CD8-positive, alpha-beta T cell (primary cell): ENCODE measurements at regions of chr17 and their contacts with region 1.

Region 1: DNA sequence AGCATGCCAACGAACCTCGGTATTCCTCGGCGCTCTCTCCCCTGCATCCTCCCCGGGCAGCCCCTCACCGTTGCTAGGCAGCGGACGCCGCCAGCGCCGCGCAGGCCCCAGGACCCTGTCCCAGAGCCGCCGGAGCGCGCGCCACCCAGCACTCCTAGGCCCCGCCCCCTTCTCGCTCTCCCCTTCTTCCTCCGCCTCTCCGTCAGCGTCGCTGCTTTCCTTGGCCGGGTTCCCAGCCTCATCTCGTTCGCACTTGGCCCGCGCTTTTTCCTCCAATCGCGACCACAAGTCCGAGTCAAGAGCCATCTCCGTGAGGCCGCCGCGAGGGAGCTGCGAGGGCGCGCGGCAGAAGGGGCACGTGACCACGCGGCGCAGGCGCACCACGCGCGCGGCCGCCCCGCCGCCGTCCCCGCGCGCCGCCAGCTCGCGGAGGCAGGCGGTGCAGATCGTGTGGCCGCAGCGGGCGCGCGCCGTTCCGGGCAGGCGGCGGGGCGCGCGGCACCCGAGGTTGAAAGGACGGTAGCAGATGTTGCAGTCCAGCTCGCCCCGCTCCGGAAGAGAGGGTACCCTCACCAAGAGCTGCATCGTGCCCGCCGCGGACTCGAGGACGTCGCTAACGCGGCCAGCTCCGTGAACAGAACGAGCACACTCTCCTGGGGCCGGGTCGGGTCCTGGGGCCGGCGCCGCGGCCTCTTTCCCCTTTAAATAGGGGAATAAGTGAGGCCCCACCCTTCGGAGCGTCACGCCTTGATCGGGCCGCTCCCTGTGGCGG is at the start of gene RNF227:
- DNase-seq: peak; percentile 52 to 93 (median 80)
- ATAC-seq: peak; percentile 82
- H3K4me3 ChIP-seq: peak within 1 kb of the TSS; percentile 74 to 79
- H3K4me3 Mint-ChIP-seq: peak within 1 kb of the TSS; percentile 89
- H3K27ac ChIP-seq: peak within 1 kb of the TSS; percentile 67 to 80
- H3K27ac Mint-ChIP-seq: peak within 1 kb of the TSS; percentile 90
- H3K4me1 ChIP-seq: peaks cover 25% of the 10 kb centered on the region
- H3K4me1 Mint-ChIP-seq: peaks cover 28% of the 10 kb centered on the region
- H3K27me3 ChIP-seq: no peaks in the 10 kb centered on the region
- H3K27me3 Mint-ChIP-seq: no peaks in the 10 kb centered on the region
- CTCF ChIP-seq: no peak
- total RNA-seq, gene RNF227: 2.8 to 3.3 TPM

Region 2: DNA sequence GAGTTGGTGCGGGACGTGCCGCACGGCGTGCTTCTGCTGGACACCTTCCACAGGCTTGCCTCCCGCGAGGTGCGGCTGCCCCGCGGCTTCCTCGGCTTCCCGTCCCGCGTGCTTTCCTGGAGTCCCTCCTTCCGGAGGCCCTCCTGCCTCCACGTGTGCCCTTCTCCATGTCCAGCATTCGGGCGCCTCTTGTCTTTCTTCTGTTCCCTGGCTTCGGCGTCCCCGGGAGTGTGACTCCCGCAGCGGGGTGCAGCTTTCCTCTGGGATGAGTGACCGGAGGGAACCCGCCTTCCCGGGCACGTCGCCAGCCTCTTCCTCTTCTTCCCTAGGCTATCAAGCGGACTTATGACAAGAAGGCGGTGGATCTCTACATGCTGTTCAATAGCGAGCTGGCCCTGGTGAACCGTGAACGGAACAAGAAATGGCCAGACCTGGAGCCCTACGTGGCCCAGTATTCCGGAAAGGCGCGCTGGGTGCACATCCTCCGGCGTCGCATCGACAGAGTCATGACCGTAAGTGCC is 175.3 kb before region 1 on chr17:
- CTCF ChIA-PET with region 1: interaction called, 8 read pairs
- POLR2A ChIA-PET with region 1: no interaction called
- intact Hi-C with region 1: loop called in 1 of 2 experiments (anchors 2 kb)
- DNase-seq: no peak
- ATAC-seq: no peak
- H3K4me3 ChIP-seq: no peak overlapping the region
- H3K4me3 Mint-ChIP-seq: no peak overlapping the region
- H3K27ac ChIP-seq: no peak overlapping the region
- H3K27ac Mint-ChIP-seq: no peak overlapping the region
- H3K4me1 ChIP-seq: no peaks in the 10 kb centered on the region
- H3K4me1 Mint-ChIP-seq: no peaks in the 10 kb centered on the region
- H3K27me3 ChIP-seq: peaks cover 0 to 6% of the 10 kb centered on the region in 2 experiments
- H3K27me3 Mint-ChIP-seq: peaks cover 28% of the 10 kb centered on the region
- CTCF ChIP-seq: no peak

Region 3: DNA sequence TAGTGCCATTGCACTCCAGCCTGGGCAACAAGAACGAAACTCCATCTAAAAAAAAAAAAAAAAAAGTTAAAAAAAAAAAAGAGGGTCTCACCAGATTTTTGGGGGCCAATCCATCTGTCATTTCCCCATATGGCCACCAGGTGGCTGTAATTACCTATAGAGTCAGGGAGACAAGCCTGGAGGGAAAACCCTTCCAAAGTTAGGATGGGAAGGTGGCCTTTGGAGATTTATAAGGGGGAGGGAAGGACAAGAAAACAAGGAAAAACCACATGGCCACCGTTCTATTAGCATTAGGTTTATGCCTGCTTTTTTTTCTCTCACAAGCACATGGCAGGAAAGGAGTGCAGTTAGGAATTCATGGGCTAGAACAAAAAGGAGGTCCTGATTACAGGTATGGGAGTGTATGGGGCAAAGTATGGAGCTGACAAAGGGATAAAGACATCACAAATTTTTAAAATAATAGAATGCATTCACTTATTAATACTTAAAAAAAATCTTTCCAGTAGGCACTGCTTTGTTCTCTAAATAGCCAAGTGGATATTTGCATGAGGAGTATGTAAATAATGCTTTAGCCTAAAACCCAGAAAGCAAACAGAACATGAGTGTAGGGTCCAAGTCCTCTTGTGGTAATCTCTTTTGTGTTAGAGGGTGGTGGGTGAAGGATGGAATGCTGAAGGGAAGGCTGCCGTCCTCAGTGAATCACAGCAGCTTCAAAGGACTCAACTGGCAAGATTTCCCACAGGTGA is 52.9 kb before region 1 on chr17:
- CTCF ChIA-PET with region 1: interaction called, 28 read pairs
- POLR2A ChIA-PET with region 1: interaction called, 13 read pairs
- intact Hi-C with region 1: loop called in 1 of 2 experiments (anchors 1 kb)
- DNase-seq: peak in 7 of 9 experiments; percentile 19 to 78 (median 66)
- ATAC-seq: no peak
- H3K4me3 ChIP-seq: no peak overlapping the region
- H3K4me3 Mint-ChIP-seq: no peak overlapping the region
- H3K27ac ChIP-seq: no peak overlapping the region
- H3K27ac Mint-ChIP-seq: no peak overlapping the region
- H3K4me1 ChIP-seq: peaks cover 20% of the 10 kb centered on the region
- H3K4me1 Mint-ChIP-seq: peaks cover 17% of the 10 kb centered on the region
- H3K27me3 ChIP-seq: no peaks in the 10 kb centered on the region
- H3K27me3 Mint-ChIP-seq: no peaks in the 10 kb centered on the region
- CTCF ChIP-seq: peak; percentile 75

Region 4: GRCh38 chr17:7887482-7888183 is 28.2 kb before region 1 on chr17:
- CTCF ChIA-PET with region 1: interaction called, 3 read pairs
- POLR2A ChIA-PET with region 1: interaction called, 6 read pairs
- intact Hi-C with region 1: loop called (anchors 2 kb)
- DNase-seq: peak; percentile 73 to 97 (median 87)
- ATAC-seq: peak; percentile 71
- H3K4me3 ChIP-seq: peak overlapping the region; percentile 86 to 89
- H3K4me3 Mint-ChIP-seq: no peak overlapping the region
- H3K27ac ChIP-seq: peak overlapping the region; percentile 61 to 80
- H3K27ac Mint-ChIP-seq: no peak overlapping the region
- H3K4me1 ChIP-seq: peaks cover 30% of the 10 kb centered on the region
- H3K4me1 Mint-ChIP-seq: peaks cover 13% of the 10 kb centered on the region
- H3K27me3 ChIP-seq: no peaks in the 10 kb centered on the region
- H3K27me3 Mint-ChIP-seq: no peaks in the 10 kb centered on the region
- CTCF ChIP-seq: no peak

Region 5: GRCh38 chr17:7897773-7898172 is 18.0 kb before region 1 on chr17:
- CTCF ChIA-PET with region 1: interaction called, 21 read pairs
- POLR2A ChIA-PET with region 1: interaction called, 8 read pairs
- intact Hi-C with region 1: no loop called
- DNase-seq: peak in 3 of 9 experiments; percentile 39 to 61 (median 44)
- ATAC-seq: peak; percentile 81
- H3K4me3 ChIP-seq: no peak overlapping the region
- H3K4me3 Mint-ChIP-seq: no peak overlapping the region
- H3K27ac ChIP-seq: no peak overlapping the region
- H3K27ac Mint-ChIP-seq: peak overlapping the region; percentile 75
- H3K4me1 ChIP-seq: no peaks in the 10 kb centered on the region
- H3K4me1 Mint-ChIP-seq: peaks cover 9% of the 10 kb centered on the region
- H3K27me3 ChIP-seq: no peaks in the 10 kb centered on the region
- H3K27me3 Mint-ChIP-seq: no peaks in the 10 kb centered on the region
- CTCF ChIP-seq: peak; percentile 36

Region 6: DNA sequence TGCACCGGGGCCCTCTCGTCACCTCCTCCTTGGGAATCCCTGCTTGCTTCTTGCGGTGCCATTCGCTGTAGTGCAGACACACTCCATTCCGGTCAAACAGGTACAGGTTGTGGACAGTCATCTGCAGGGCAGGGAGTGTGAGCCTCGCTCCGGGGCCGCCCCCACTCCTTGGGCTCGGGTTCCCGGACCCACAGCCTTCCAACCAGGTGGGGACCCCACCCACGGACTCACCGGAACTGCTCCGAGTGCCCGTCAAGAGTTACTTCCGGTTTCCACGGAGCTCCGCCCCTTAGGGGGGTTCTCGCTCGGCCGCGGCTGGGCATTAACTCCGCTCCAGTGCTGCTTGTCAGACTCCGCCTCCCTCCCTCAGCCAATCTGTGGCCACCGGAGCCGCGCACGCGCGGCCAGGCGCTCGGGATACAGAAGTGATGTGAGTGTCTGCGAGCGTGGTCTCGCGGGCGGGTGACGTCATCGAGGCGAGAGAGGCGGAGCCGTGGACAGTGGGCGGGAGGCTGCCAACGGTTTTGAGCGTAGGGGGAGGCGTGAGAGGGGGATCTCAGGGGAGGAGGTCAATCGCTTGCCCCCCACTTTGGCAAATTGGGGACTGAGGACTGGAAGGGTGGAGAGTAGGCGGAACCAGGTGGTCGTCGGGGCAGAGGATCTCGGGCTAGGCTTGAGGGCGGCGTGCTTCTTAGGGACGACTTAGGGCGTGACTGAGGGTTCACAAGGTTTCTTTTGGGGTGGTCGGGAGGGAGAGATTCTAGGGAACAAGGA is 16.1 kb after region 1 on chr17 and contains the starts of genes CNTROB and TRAPPC1:
- CTCF ChIA-PET with region 1: interaction called, 13 read pairs
- POLR2A ChIA-PET with region 1: interaction called, 38 read pairs
- intact Hi-C with region 1: loop called (anchors 1 kb)
- DNase-seq: peak; percentile 99 to 100 (median 99)
- ATAC-seq: peak; percentile 93
- H3K4me3 ChIP-seq: peak within 1 kb of the TSS; percentile 96
- H3K4me3 Mint-ChIP-seq: peak within 1 kb of the TSS; percentile 100
- H3K27ac ChIP-seq: peak within 1 kb of the TSS; percentile 85
- H3K27ac Mint-ChIP-seq: peak within 1 kb of the TSS; percentile 99
- H3K4me1 ChIP-seq: peaks cover 22% of the 10 kb centered on the region
- H3K4me1 Mint-ChIP-seq: peaks cover 50% of the 10 kb centered on the region
- H3K27me3 ChIP-seq: no peaks in the 10 kb centered on the region
- H3K27me3 Mint-ChIP-seq: no peaks in the 10 kb centered on the region
- CTCF ChIP-seq: no peak
- total RNA-seq, gene CNTROB: 20.1 to 23.6 TPM
- total RNA-seq, gene TRAPPC1: 29.6 to 39.4 TPM

Region 7: GRCh38 chr17:8041249-8041928 is 125.6 kb after region 1 on chr17:
- CTCF ChIA-PET with region 1: interaction called, 6 read pairs
- POLR2A ChIA-PET with region 1: no interaction called
- intact Hi-C with region 1: loop called (anchors 1 kb)
- DNase-seq: peak in 6 of 9 experiments; percentile 24 to 67 (median 36)
- ATAC-seq: peak; percentile 59
- H3K4me3 ChIP-seq: no peak overlapping the region
- H3K4me3 Mint-ChIP-seq: no peak overlapping the region
- H3K27ac ChIP-seq: no peak overlapping the region
- H3K27ac Mint-ChIP-seq: no peak overlapping the region
- H3K4me1 ChIP-seq: peaks cover 4% of the 10 kb centered on the region
- H3K4me1 Mint-ChIP-seq: peaks cover 2% of the 10 kb centered on the region
- H3K27me3 ChIP-seq: peaks cover 0 to 8% of the 10 kb centered on the region in 2 experiments
- H3K27me3 Mint-ChIP-seq: peaks cover 22% of the 10 kb centered on the region
- CTCF ChIP-seq: peak; percentile 59

Region 8: GRCh38 chr17:8109661-8110464 is 194.1 kb after region 1 on chr17:
- CTCF ChIA-PET with region 1: no interaction called
- POLR2A ChIA-PET with region 1: no interaction called
- intact Hi-C with region 1: no loop called
- DNase-seq: peak; percentile 68 to 91 (median 83)
- ATAC-seq: peak; percentile 99
- H3K4me3 ChIP-seq: peak overlapping the region; percentile 40 to 77
- H3K4me3 Mint-ChIP-seq: peak overlapping the region; percentile 71
- H3K27ac ChIP-seq: peak overlapping the region in 1 of 2 experiments; percentile 31
- H3K27ac Mint-ChIP-seq: no peak overlapping the region
- H3K4me1 ChIP-seq: peaks cover 9% of the 10 kb centered on the region
- H3K4me1 Mint-ChIP-seq: peaks cover 4% of the 10 kb centered on the region
- H3K27me3 ChIP-seq: peaks cover 0 to 24% of the 10 kb centered on the region in 2 experiments
- H3K27me3 Mint-ChIP-seq: peaks cover 28% of the 10 kb centered on the region
- CTCF ChIP-seq: peak; percentile 94

Region 9: GRCh38 chr17:8670421-8670820 is 754.6 kb after region 1 on chr17:
- CTCF ChIA-PET with region 1: no interaction called
- POLR2A ChIA-PET with region 1: no interaction called
- intact Hi-C with region 1: no loop called
- DNase-seq: no peak
- ATAC-seq: no peak
- H3K4me3 ChIP-seq: no peak overlapping the region
- H3K4me3 Mint-ChIP-seq: no peak overlapping the region
- H3K27ac ChIP-seq: no peak overlapping the region
- H3K27ac Mint-ChIP-seq: no peak overlapping the region
- H3K4me1 ChIP-seq: no peaks in the 10 kb centered on the region
- H3K4me1 Mint-ChIP-seq: no peaks in the 10 kb centered on the region
- H3K27me3 ChIP-seq: no peaks in the 10 kb centered on the region
- H3K27me3 Mint-ChIP-seq: peaks cover 11% of the 10 kb centered on the region
- CTCF ChIP-seq: no peak